ENCODE measurements at regions of chr18 and their contacts with region 1.

Region 1: GRCh38 chr18:14086458-14087231 is 45.6 kb downstream of the ZNF519 start:
- DNase-seq: no peak
- ATAC-seq: peak in 3 of 4 donors; percentile 58 to 70 (median 60)
- H3K4me3 ChIP-seq: no peak overlapping the region
- H3K27ac ChIP-seq: no peak overlapping the region
- H3K4me1 ChIP-seq: no peaks in the 10 kb centered on the region
- H3K27me3 ChIP-seq: peaks cover 0 to 6% (median 2%) of the 10 kb centered on the region in 4 donors
- CTCF ChIP-seq: peak in 2 of 4 donors; percentile 23 to 40

Region 2: DNA sequence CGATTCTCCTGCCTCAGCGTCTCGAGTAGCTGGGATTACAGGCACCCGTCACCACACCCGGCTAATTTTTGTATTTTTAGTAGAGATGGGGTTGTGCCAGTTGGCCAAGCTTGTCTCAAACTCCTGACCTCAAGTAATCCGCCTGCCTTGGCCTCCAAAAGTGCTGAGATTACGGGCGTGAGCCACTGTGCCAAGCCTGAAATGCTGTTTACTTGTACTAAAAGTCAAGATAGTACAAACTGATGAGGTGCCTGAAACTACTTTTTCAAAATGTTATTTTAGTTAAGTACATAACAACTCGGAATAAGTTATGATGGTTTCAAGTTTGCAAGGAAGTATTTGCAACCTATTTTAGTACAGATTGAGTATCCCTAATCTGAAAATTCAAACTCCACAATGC is 1009.8 kb before region 1 on chr18:
- intact Hi-C with region 1: no loop called
- DNase-seq: peak in 3 of 6 donors; percentile 19 to 36 (median 30)
- ATAC-seq: peak in 3 of 4 donors; percentile 38 to 80 (median 40)
- H3K4me3 ChIP-seq: no peak overlapping the region
- H3K27ac ChIP-seq: no peak overlapping the region
- H3K4me1 ChIP-seq: peaks cover 0 to 5% (median 0%) of the 10 kb centered on the region in 3 donors
- H3K27me3 ChIP-seq: no peaks in the 10 kb centered on the region
- CTCF ChIP-seq: no peak

Region 3: GRCh38 chr18:13823707-13824395 is 262.8 kb before region 1 on chr18 and contains the start of gene MC5R:
- intact Hi-C with region 1: loop called in 1 of 3 experiments (anchors 10 kb)
- DNase-seq: peak in 5 of 6 donors; percentile 21 to 93 (median 64)
- ATAC-seq: peak; percentile 95 to 100 (median 98)
- H3K4me3 ChIP-seq: peak within 1 kb of the TSS in 3 of 4 donors; percentile 33 to 44 (median 39)
- H3K27ac ChIP-seq: no peak within 1 kb of the TSS
- H3K4me1 ChIP-seq: no peaks in the 10 kb centered on the region
- H3K27me3 ChIP-seq: no peaks in the 10 kb centered on the region
- CTCF ChIP-seq: peak; percentile 62 to 76 (median 69)
- total RNA-seq, gene MC5R: not detected

Measured in pancreas (tissue), 10 donors.